Prostate gland (tissue), 2 donors: ENCODE measurements at regions of chr5 and their contacts with region 1.

Region 1: GRCh38 chr5:36739751-36740221 is 133.4 kb downstream of the SLC1A3 start:
- DNase-seq: peak; percentile 66
- H3K4me3 ChIP-seq: no peak overlapping the region
- H3K27ac ChIP-seq: no peak overlapping the region
- H3K4me1 ChIP-seq: peaks cover 6% of the 10 kb centered on the region
- H3K27me3 ChIP-seq: no peaks in the 10 kb centered on the region
- CTCF ChIP-seq: peak; percentile 57 to 88 (median 74)
- POLR2A ChIP-seq: no peak

Region 2: GRCh38 chr5:36982146-36982545 is 242.4 kb after region 1 on chr5:
- intact Hi-C with region 1: no loop called
- DNase-seq: no peak
- H3K4me3 ChIP-seq: no peak overlapping the region
- H3K27ac ChIP-seq: no peak overlapping the region
- H3K4me1 ChIP-seq: no peaks in the 10 kb centered on the region
- H3K27me3 ChIP-seq: no peaks in the 10 kb centered on the region
- CTCF ChIP-seq: no peak
- POLR2A ChIP-seq: no peak

Region 3: DNA sequence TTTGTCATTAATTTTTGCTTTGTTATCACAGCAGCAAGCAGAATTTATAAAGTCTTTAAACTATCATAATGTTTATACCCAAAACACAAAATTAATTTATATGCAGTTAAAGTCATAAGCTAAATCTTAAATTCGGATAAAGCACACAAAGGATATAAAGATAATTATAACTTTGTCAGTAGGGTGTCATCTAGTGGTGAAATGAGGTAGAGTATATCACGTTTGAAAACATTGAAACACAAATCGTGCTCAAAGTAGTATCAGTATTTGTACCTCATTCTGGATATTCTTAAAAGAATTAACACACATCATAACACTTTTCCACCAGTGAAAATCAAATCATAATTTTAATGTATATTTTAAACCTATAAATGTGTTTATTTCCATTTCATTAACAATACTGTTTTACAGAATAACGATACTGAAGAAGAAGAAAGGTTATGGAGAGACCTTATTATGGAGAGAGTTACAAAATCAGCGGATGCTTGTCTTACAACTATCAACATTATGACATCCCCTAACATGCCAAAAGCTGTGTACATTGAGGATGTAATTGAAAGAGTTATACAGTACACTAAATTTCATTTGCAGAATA is 266.3 kb after region 1 on chr5:
- intact Hi-C with region 1: loop called (anchors 5 kb)
- DNase-seq: no peak
- H3K4me3 ChIP-seq: no peak overlapping the region
- H3K27ac ChIP-seq: no peak overlapping the region
- H3K4me1 ChIP-seq: no peaks in the 10 kb centered on the region
- H3K27me3 ChIP-seq: no peaks in the 10 kb centered on the region
- CTCF ChIP-seq: peak in 3 of 4 experiments; percentile 47 to 72 (median 70)
- POLR2A ChIP-seq: no peak